Activated B cell treated with CpG ODN at 0.5 μM for 24 hours (primary cell): ENCODE measurements at regions of chr1 and their contacts with region 1.

Region 1: GRCh38 chr1:204506961-204507387 is 9.2 kb upstream of the MDM4 start:
- DNase-seq: peak; percentile 66
- ATAC-seq: peak; percentile 62
- H3K4me3 Mint-ChIP-seq: peak overlapping the region; percentile 91
- H3K27ac Mint-ChIP-seq: peak overlapping the region; percentile 99
- H3K4me1 Mint-ChIP-seq: peaks cover 74% of the 10 kb centered on the region
- H3K27me3 Mint-ChIP-seq: peaks cover 5% of the 10 kb centered on the region
- CTCF ChIP-seq: no peak

Region 2: DNA sequence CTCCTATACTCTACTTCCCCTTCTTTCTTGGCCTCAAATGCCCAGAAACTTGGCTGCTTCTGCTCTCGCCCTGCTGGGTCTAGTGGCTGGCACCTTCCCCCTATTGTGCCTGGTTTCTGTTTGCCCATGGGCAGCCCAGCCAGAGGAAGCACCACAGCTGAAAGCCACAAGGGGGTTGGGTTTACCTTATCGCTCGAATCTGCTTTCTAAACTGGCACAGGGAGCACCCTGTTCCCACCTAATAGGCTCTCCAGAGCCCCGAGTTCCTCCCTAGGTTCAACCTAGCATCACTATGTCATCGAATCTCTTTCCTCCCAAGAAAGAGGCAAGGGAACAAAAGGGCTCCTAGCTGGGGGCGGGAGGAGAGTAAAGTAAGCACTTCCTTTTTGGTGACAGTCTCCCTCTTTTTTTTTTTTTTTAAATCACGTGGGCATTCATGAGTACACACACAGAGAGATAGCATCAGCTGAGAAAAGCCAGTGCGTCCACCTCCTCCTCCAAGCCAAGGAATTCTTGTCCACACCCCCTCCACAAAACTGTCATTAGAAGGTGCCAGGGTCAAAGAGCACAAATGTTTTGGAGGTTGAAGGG is 220.0 kb before region 1 on chr1:
- CTCF ChIA-PET with region 1: no interaction called
- POLR2A ChIA-PET with region 1: no interaction called
- intact Hi-C with region 1: loop called (anchors 5 kb)
- DNase-seq: peak; percentile 26
- ATAC-seq: peak; percentile 87
- H3K4me3 Mint-ChIP-seq: peak overlapping the region; percentile 88
- H3K27ac Mint-ChIP-seq: peak overlapping the region; percentile 86
- H3K4me1 Mint-ChIP-seq: peaks cover 19% of the 10 kb centered on the region
- H3K27me3 Mint-ChIP-seq: peaks cover 16% of the 10 kb centered on the region
- CTCF ChIP-seq: no peak

Region 3: DNA sequence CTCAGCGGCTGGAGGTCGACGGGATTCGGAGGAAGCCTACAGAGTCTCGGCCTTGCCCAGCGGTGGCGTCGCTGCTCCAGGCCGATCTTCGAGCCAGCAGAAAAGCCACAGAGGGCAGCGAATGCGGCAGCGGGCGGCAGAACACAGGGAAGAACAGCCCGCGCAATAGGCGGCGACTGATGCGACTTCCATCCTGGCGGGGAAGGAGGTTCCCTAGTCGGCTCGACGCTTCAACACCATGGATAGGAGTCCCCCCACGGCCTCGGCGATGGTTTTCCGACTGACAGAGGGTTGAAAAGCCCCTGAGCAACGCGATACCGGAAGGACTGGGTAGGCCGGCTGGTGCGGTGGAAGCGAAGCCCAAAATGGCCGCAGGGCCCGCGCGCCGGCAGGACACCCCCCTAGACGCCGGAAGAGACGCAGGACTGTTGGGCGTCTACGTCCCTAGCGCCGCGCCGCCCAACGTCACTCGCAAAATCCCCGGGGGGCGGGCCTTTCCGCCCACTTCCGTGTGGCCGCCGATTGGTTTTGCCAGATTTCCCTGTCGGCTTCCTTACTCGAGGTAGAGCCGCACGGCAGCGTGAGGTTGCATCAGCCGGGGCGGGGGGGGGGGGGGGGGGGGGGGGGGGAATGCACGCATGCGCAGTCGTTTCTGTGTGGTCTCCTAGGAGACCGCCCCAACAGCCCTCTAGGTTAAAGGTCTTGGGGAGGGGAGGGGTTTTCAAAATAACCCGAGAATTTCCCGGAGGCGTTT is 95.3 kb before region 1 on chr1 and contains the start of gene PPP1R15B:
- CTCF ChIA-PET with region 1: interaction called, 6 read pairs
- POLR2A ChIA-PET with region 1: interaction called, 7 read pairs
- intact Hi-C with region 1: loop called (anchors 1 kb)
- DNase-seq: peak; percentile 96
- ATAC-seq: peak; percentile 89
- H3K4me3 Mint-ChIP-seq: peak within 1 kb of the TSS; percentile 99
- H3K27ac Mint-ChIP-seq: peak within 1 kb of the TSS; percentile 99
- H3K4me1 Mint-ChIP-seq: peaks cover 29% of the 10 kb centered on the region
- H3K27me3 Mint-ChIP-seq: no peaks in the 10 kb centered on the region
- CTCF ChIP-seq: no peak
- total RNA-seq, gene PPP1R15B: 60.4 and 70.6 TPM in 2 replicates

Region 4: DNA sequence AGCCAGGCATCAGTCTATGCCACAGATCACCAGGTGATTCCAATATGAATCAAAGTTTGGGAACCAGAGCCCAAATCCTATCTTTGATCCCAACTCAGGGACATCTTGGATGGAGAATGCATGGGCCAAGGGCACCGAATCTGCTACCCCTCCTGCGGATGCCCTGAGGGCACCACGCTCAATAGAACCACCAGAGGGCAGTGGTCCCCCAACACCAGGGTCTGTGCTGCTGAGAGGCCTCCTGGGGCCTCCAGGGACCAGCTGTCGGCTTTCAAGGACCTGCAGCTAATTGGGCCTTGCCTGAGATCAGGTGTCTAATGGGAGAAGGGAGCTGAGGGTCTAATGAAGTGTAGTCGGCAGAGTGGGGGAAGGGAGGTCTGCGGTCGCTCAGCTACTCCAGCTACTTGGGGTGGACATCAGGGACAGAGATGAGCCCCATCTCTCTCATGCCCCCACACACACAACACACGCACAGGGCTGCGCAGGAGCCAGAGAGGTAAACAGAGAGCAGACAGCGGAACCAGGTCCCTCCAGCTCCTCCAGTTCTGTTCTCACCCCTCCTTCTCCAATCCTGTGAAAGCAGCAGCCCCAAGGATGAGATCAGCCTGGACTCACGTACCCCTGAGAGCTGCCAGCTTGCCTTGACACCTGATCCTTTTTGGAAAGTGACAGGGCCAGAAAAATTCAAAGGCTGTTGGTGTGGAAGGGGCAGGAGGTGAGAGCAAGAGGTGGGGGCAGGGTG is 60.4 kb before region 1 on chr1:
- CTCF ChIA-PET with region 1: interaction called, 1,006 read pairs
- POLR2A ChIA-PET with region 1: interaction called, 72 read pairs
- intact Hi-C with region 1: loop called (anchors 1 kb)
- DNase-seq: peak; percentile 70
- ATAC-seq: peak; percentile 90
- H3K4me3 Mint-ChIP-seq: peak overlapping the region; percentile 62
- H3K27ac Mint-ChIP-seq: peak overlapping the region; percentile 82
- H3K4me1 Mint-ChIP-seq: peaks cover 60% of the 10 kb centered on the region
- H3K27me3 Mint-ChIP-seq: no peaks in the 10 kb centered on the region
- CTCF ChIP-seq: no peak

Region 5: DNA sequence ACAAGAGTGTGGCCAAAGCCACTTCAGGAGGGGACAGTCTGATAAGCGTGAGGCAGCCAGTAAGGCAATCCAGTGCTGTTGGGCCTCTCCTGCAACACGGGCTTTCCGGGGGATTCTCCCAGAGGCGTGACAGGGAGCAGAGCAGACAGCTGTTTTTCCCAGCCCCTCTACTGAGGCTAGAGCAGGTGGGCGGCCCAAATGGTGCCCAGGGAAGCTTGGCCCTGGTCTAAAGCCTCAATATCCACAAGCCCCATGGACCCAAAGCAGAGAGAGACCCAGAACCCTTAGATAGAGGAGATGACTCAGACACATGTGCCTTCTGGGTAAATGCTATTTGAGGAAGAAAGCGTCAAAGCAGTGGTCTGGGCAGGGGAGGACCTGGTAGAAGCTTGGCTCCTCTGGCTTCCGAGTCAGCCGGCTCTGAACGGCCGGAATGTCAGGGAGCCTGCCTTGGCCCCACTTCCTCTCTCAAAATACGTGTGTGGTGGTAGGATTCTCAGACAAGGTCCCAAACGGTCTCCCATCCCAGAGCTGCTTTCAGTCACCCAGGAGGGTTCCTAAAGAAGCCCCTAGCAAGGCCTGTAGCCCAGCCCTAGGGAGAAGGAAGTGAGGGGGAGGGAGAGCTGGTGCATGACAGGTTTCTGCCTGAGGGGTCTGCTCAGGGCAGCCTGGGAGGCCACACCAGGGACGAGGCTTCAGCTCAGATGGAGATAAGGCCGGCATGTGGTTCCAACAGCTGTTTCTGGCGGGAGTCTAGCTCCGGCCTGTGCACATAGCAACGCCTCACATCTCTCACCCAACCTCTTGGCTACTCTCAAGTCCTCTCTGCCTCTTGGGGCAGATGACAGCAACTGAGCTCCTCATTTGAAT is 41.2 kb before region 1 on chr1:
- CTCF ChIA-PET with region 1: interaction called, 12 read pairs
- POLR2A ChIA-PET with region 1: interaction called, 17 read pairs
- intact Hi-C with region 1: no loop called
- DNase-seq: peak; percentile 49
- ATAC-seq: peak; percentile 53
- H3K4me3 Mint-ChIP-seq: peak overlapping the region; percentile 52
- H3K27ac Mint-ChIP-seq: peak overlapping the region; percentile 94
- H3K4me1 Mint-ChIP-seq: peaks cover 85% of the 10 kb centered on the region
- H3K27me3 Mint-ChIP-seq: no peaks in the 10 kb centered on the region
- CTCF ChIP-seq: no peak

Region 6: DNA sequence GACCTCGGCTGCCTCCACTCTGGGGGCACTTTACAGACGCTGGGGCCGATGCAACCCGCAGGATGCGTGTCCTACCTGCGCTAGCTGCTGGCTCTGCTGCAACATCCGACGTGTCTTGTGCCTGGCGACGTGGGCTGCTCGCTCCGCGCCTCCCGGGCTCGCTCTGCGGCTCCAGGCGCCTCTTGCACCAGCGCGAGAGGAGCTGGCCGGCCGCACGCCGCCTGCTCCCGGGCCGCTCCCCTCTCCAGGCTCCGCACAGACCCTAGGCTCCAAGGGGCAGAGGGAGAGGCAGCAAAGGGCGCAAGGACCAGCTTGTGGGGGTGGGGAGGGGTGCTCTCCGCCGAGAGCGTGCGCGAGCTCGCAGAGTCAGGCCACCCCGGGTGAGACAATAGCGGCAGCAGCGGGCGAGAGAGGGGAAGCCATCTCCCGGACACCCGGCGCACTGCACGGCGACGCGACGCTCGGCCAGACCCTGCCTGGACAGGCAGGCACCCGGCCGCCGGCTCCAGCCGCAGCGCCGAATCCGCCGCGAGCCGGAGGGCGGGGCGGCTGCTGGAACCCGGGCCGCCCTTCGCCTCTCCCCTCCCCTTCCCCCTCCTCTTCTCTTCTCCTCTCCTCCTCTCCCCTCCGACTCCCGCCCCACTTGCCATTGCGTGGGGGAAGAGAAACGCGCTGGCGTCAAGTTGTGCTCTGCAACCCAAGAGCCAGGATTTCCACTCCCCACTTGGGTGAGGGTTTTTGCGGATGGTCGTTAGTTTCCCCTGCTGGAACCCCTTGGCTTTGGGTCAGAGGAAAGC is 12.5 kb before region 1 on chr1 and contains the start of gene PIK3C2B:
- CTCF ChIA-PET with region 1: interaction called, 20 read pairs
- POLR2A ChIA-PET with region 1: interaction called, 85 read pairs
- intact Hi-C with region 1: no loop called
- DNase-seq: peak; percentile 71
- ATAC-seq: peak; percentile 75
- H3K4me3 Mint-ChIP-seq: peak within 1 kb of the TSS; percentile 97
- H3K27ac Mint-ChIP-seq: peak within 1 kb of the TSS; percentile 97
- H3K4me1 Mint-ChIP-seq: peaks cover 80% of the 10 kb centered on the region
- H3K27me3 Mint-ChIP-seq: no peaks in the 10 kb centered on the region
- CTCF ChIP-seq: no peak
- total RNA-seq, gene PIK3C2B: 127 and 151 TPM in 2 replicates

Region 7: DNA sequence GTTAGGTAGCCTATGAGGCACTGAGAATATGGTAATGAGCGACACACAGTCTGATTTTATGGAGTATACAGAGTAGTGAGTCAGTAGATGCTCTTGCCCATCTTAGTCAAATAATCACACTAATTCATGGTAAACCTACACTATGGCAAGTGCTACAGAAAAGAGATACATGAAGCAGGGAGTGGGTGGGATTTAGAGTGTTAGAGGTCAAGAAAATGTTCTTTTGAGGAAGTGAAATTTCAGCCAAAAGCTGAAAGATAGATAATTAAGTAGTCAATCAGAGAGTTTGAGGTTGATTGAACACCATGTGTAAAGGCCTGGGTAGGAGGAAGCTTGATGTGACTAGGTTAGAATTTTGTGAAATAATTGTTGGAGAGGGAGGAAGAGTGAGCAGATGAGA is 24.0 kb after region 1 on chr1:
- CTCF ChIA-PET with region 1: interaction called, 11 read pairs
- POLR2A ChIA-PET with region 1: interaction called, 21 read pairs
- intact Hi-C with region 1: loop called (anchors 2 kb)
- DNase-seq: no peak
- ATAC-seq: peak; percentile 86
- H3K4me3 Mint-ChIP-seq: no peak overlapping the region
- H3K27ac Mint-ChIP-seq: peak overlapping the region; percentile 55
- H3K4me1 Mint-ChIP-seq: peaks cover 26% of the 10 kb centered on the region
- H3K27me3 Mint-ChIP-seq: no peaks in the 10 kb centered on the region
- CTCF ChIP-seq: no peak